ENCODE measurements at regions of chr15 and their contacts with region 1.

Region 1: GRCh38 chr15:65712415-65712814 is 79.7 kb downstream of the DENND4A start:
- DNase-seq: no peak
- ATAC-seq: no peak
- H3K4me3 Mint-ChIP-seq: no peak overlapping the region
- H3K27ac Mint-ChIP-seq: no peak overlapping the region
- H3K4me1 Mint-ChIP-seq: no peaks in the 10 kb centered on the region
- H3K27me3 Mint-ChIP-seq: no peaks in the 10 kb centered on the region
- CTCF ChIP-seq: no peak

Region 2: GRCh38 chr15:65660927-65661326 is 51.5 kb before region 1 on chr15:
- CTCF ChIA-PET with region 1: no interaction called
- POLR2A ChIA-PET with region 1: no interaction called
- intact Hi-C with region 1: loop called (anchors 5 kb)
- DNase-seq: no peak
- ATAC-seq: no peak
- H3K4me3 Mint-ChIP-seq: no peak overlapping the region
- H3K27ac Mint-ChIP-seq: no peak overlapping the region
- H3K4me1 Mint-ChIP-seq: peaks cover 36% of the 10 kb centered on the region
- H3K27me3 Mint-ChIP-seq: no peaks in the 10 kb centered on the region
- CTCF ChIP-seq: no peak

Region 3: GRCh38 chr15:65723876-65724275 is 11.5 kb after region 1 on chr15:
- CTCF ChIA-PET with region 1: no interaction called
- POLR2A ChIA-PET with region 1: interaction called, 12 read pairs
- intact Hi-C with region 1: no loop called
- DNase-seq: no peak
- ATAC-seq: no peak
- H3K4me3 Mint-ChIP-seq: no peak overlapping the region
- H3K27ac Mint-ChIP-seq: no peak overlapping the region
- H3K4me1 Mint-ChIP-seq: no peaks in the 10 kb centered on the region
- H3K27me3 Mint-ChIP-seq: no peaks in the 10 kb centered on the region
- CTCF ChIP-seq: no peak

Region 4: DNA sequence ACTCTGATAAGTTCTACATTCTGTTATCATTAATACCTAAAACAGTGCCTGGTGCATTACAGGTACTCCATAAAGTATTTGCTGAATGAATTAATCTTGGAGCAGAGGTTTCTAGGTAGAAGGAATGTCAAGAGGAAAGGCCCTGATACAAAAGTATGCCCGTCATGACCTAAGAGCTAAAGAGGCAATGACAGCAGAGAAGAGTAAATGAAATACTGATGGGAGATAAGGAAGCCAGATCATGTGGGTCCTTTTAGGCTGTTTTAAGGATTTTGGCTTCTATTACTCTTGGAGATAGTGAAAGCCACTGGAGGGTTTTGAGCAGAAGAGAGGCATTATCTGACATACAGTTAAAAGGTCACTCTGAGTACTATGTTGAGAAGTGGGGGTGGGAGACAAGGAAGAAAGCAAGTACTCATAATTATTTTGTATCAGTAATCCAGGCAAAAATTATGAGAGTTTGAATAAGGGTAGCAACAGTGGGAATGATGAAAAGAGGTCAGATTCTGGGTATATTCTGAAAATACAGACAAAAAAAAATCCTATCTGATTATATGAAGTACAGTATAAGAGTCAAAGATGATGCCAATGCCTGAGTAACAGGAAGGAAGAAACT is 31.3 kb after region 1 on chr15:
- CTCF ChIA-PET with region 1: no interaction called
- POLR2A ChIA-PET with region 1: interaction called, 3 read pairs
- intact Hi-C with region 1: loop called (anchors 5 kb)
- DNase-seq: no peak
- ATAC-seq: no peak
- H3K4me3 Mint-ChIP-seq: no peak overlapping the region
- H3K27ac Mint-ChIP-seq: no peak overlapping the region
- H3K4me1 Mint-ChIP-seq: peaks cover 4% of the 10 kb centered on the region
- H3K27me3 Mint-ChIP-seq: no peaks in the 10 kb centered on the region
- CTCF ChIP-seq: no peak

Region 5: GRCh38 chr15:65773386-65774111 is 61.1 kb after region 1 on chr15:
- CTCF ChIA-PET with region 1: no interaction called
- POLR2A ChIA-PET with region 1: no interaction called
- intact Hi-C with region 1: loop called (anchors 5 kb)
- DNase-seq: no peak
- ATAC-seq: peak; percentile 71
- H3K4me3 Mint-ChIP-seq: peak overlapping the region; percentile 76
- H3K27ac Mint-ChIP-seq: peak overlapping the region; percentile 94
- H3K4me1 Mint-ChIP-seq: peaks cover 90% of the 10 kb centered on the region
- H3K27me3 Mint-ChIP-seq: no peaks in the 10 kb centered on the region
- CTCF ChIP-seq: no peak

Region 6: DNA sequence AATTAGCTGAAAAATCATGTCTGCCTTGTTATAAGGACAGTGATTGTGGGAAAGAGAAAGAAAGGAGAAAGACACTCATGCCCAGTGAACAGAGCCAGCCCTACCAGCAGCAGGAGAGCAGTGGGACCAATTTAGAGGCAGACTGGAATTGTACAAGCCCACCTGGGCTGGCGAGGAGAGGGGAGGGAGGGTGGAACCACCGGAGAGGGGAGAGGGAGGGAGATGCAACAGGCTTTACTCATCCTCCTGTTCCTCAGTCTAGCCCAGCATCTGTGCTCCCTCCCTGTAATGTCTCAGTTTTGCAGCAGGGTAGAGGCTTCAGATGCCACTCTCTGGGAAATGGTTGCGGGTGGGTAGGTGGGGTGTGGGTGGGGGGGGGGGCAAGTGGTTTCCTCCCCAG is 211.6 kb after region 1 on chr15:
- CTCF ChIA-PET with region 1: no interaction called
- POLR2A ChIA-PET with region 1: interaction called, 14 read pairs
- intact Hi-C with region 1: no loop called
- DNase-seq: no peak
- ATAC-seq: no peak
- H3K4me3 Mint-ChIP-seq: no peak overlapping the region
- H3K27ac Mint-ChIP-seq: no peak overlapping the region
- H3K4me1 Mint-ChIP-seq: peaks cover 36% of the 10 kb centered on the region
- H3K27me3 Mint-ChIP-seq: no peaks in the 10 kb centered on the region
- CTCF ChIP-seq: no peak